ENCODE measurements at regions of chr2 and their contacts with region 1.

Region 1: GRCh38 chr2:145593832-145594614 is 1074.1 kb upstream of the ZEB2 start:
- DNase-seq: peak; percentile 94
- ATAC-seq: peak; percentile 87
- H3K4me3 ChIP-seq: 0 out of 2 replicates have a peak overlapping the region, but pooled peaks have one; percentile 5
- H3K27ac ChIP-seq: peak overlapping the region; percentile 94
- H3K4me1 ChIP-seq: peaks cover 46% of the 10 kb centered on the region
- H3K27me3 ChIP-seq: no peaks in the 10 kb centered on the region
- CTCF ChIP-seq: peak; percentile 50

Region 2: GRCh38 chr2:145484443-145485097 is 109.5 kb before region 1 on chr2:
- CTCF ChIA-PET with region 1: no interaction called
- POLR2A ChIA-PET with region 1: no interaction called
- intact Hi-C with region 1: loop called (anchors 2 kb)
- DNase-seq: peak; percentile 91
- ATAC-seq: peak; percentile 98
- H3K4me3 ChIP-seq: no peak overlapping the region
- H3K27ac ChIP-seq: peak overlapping the region; percentile 71
- H3K4me1 ChIP-seq: peaks cover 16% of the 10 kb centered on the region
- H3K27me3 ChIP-seq: no peaks in the 10 kb centered on the region
- CTCF ChIP-seq: peak; percentile 70

Region 3: GRCh38 chr2:145561152-145561551 is 32.9 kb before region 1 on chr2:
- CTCF ChIA-PET with region 1: no interaction called
- POLR2A ChIA-PET with region 1: no interaction called
- intact Hi-C with region 1: loop called (anchors 1 kb)
- DNase-seq: peak; percentile 80
- ATAC-seq: peak; percentile 95
- H3K4me3 ChIP-seq: no peak overlapping the region
- H3K27ac ChIP-seq: peak overlapping the region; percentile 66
- H3K4me1 ChIP-seq: peaks cover 30% of the 10 kb centered on the region
- H3K27me3 ChIP-seq: no peaks in the 10 kb centered on the region
- CTCF ChIP-seq: no peak